CD4-positive, alpha-beta memory T cell (primary cell): ENCODE measurements at regions of chr3 and their contacts with region 1.

Region 1: DNA sequence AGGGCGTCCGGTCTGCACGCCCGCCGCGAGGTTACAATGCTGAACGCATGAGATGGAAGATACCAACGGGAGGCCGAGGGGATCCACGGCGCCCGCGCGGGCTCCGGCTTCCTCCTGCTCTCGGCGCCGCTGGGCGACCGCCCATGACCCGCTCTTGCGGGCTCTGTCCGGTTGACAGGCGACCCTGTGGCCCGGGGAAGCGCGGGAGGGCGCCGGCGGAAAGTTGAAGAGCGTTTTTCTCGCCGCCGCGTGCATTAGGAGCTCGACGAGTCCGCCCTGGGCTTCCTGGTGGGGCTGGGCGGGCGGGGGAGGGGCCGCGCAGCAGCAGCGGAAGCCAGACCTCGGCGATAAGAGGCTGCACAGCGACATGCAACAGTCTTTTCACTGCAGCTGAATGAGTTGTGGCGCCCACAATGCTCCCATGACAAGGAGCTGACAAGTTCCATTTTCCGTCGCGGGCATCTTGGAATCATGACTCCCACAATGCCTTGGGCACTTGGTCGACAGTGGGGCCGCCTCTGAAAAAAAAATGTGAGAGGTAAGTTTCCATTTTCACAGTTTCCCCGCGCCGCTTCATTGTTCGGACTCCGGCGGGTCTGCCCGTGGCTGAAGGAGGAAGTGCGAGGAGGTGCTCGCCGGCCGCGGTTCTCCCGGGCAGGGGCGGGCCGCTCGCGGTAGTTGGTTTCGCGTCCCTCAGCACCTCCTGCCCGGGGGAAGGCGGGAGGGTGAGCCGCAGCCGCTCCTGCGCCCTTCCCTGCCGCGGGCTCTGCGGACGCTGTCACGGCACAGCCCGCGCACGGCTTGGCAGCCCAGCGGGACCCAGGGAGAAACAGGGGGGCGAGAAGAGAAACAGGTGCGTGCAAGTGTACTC is at the start of gene MBNL1:
- DNase-seq: peak; percentile 83 to 93 (median 86)
- H3K4me3 ChIP-seq: peak within 1 kb of the TSS; percentile 87 to 90
- H3K4me3 Mint-ChIP-seq: peak within 1 kb of the TSS; percentile 90 to 100 (median 97)
- H3K27ac ChIP-seq: peak within 1 kb of the TSS; percentile 91
- H3K27ac Mint-ChIP-seq: peak within 1 kb of the TSS; percentile 80 to 100 (median 97)
- H3K4me1 ChIP-seq: peaks cover 61% of the 10 kb centered on the region
- H3K4me1 Mint-ChIP-seq: peaks cover 44 to 80% (median 57%) of the 10 kb centered on the region in 4 donors
- H3K27me3 ChIP-seq: no peaks in the 10 kb centered on the region
- H3K27me3 Mint-ChIP-seq: no peaks in the 10 kb centered on the region
- total RNA-seq, gene MBNL1: 420 to 430 TPM

Region 2: DNA sequence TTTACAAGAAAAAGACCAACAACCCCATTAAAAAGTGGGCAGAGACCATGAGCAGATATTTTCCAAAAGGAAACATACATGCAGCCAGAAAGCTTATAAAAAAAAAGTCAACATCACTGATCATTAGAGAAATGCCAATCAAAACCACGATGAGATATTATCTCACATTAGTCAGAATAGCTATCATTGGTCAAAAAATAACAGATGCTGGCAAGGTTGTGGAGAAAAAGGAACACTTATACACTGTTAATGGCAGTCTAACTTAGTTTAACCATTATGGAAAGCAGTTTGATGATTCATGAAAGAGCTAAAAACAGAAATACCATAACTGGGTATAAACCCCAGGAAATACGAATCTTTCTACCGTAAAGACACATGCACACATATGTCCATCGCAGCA is 319.1 kb before region 1 on chr3:
- CTCF ChIA-PET with region 1: no interaction called
- POLR2A ChIA-PET with region 1: no interaction called
- intact Hi-C with region 1: no loop called
- DNase-seq: no peak
- H3K4me3 ChIP-seq: no peak overlapping the region
- H3K4me3 Mint-ChIP-seq: no peak overlapping the region
- H3K27ac ChIP-seq: no peak overlapping the region
- H3K27ac Mint-ChIP-seq: no peak overlapping the region
- H3K4me1 ChIP-seq: no peaks in the 10 kb centered on the region
- H3K4me1 Mint-ChIP-seq: no peaks in the 10 kb centered on the region
- H3K27me3 ChIP-seq: no peaks in the 10 kb centered on the region
- H3K27me3 Mint-ChIP-seq: peaks cover 32 to 34% of the 10 kb centered on the region in 2 donors

Region 3: GRCh38 chr3:152051501-152052404 is 217.0 kb before region 1 on chr3:
- CTCF ChIA-PET with region 1: no interaction called
- POLR2A ChIA-PET with region 1: no interaction called
- intact Hi-C with region 1: no loop called
- DNase-seq: no peak
- H3K4me3 ChIP-seq: no peak overlapping the region
- H3K4me3 Mint-ChIP-seq: no peak overlapping the region
- H3K27ac ChIP-seq: no peak overlapping the region
- H3K27ac Mint-ChIP-seq: no peak overlapping the region
- H3K4me1 ChIP-seq: no peaks in the 10 kb centered on the region
- H3K4me1 Mint-ChIP-seq: no peaks in the 10 kb centered on the region
- H3K27me3 ChIP-seq: no peaks in the 10 kb centered on the region
- H3K27me3 Mint-ChIP-seq: no peaks in the 10 kb centered on the region

Region 4: DNA sequence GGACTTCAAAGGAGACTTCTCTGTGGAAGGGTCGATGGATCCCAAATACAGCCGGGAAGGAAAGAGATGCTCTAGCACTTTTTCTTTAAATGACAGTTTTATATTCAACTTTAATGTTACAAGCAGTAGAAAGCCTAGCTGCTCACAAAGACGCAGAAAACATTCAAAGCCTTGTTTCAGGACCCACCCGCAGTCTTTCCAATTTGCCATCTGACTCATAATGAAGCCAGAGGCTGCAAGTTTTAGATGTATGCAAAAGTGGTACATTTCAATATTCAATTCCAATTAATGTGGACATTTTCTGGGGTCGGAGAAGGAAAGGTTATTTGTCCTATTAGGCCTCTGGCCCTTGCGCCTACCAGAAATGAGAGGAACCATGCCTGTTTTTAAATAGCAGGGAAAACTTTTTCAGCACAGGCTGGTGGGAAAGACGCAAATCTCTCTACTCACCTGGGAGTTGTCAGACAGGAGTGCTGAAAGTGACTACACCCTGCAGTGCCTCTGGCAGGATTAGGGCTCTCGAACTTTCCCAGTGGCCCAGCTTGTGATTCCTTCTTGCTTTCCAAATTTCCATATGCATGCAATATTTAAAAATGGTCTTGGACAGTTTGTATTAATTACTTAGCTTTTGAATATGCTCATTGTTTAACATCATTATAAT is 117.4 kb before region 1 on chr3:
- CTCF ChIA-PET with region 1: no interaction called
- POLR2A ChIA-PET with region 1: no interaction called
- intact Hi-C with region 1: no loop called
- DNase-seq: no peak
- H3K4me3 ChIP-seq: no peak overlapping the region
- H3K4me3 Mint-ChIP-seq: no peak overlapping the region
- H3K27ac ChIP-seq: no peak overlapping the region
- H3K27ac Mint-ChIP-seq: peak overlapping the region in 1 of 7 donors; percentile 14
- H3K4me1 ChIP-seq: no peaks in the 10 kb centered on the region
- H3K4me1 Mint-ChIP-seq: peaks cover 0 to 4% (median 2%) of the 10 kb centered on the region in 4 donors
- H3K27me3 ChIP-seq: no peaks in the 10 kb centered on the region
- H3K27me3 Mint-ChIP-seq: peaks cover 0 to 2% of the 10 kb centered on the region in 2 donors

Region 5: DNA sequence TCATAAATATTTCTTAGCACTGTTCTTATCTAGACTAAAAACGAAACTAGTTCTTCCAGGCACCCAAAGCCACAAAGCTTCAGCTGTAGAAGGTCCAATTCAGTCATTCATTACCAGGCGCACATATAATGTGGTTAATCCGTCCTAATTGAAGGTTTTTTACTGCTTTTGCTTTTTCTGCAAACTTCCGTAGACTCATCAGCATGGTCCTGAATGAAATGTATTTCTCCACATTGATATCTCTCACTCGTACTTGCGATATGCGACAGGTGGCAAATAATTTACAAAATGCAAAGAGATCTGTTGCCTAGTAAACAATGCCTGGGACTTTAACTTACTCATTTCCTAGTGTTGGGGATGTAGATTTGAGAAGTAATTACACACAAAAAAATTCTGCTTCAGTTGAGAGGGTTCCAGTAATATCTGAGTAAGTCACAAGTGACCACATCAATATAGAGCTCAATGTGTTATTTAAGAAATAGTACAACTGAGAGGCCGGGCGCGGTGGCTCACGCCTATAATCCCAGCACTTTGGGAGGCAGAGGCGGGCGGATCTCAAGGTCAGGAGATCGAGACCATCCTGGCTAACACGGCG is 75.0 kb before region 1 on chr3:
- CTCF ChIA-PET with region 1: interaction called, 4 read pairs
- POLR2A ChIA-PET with region 1: interaction called, 267 read pairs
- intact Hi-C with region 1: loop called (anchors 1 kb)
- DNase-seq: peak; percentile 63 to 79 (median 68)
- H3K4me3 ChIP-seq: peak overlapping the region; percentile 31 to 37
- H3K4me3 Mint-ChIP-seq: peak overlapping the region; percentile 81 to 97 (median 90)
- H3K27ac ChIP-seq: peak overlapping the region; percentile 62
- H3K27ac Mint-ChIP-seq: peak overlapping the region; percentile 89 to 98 (median 92)
- H3K4me1 ChIP-seq: peaks cover 82% of the 10 kb centered on the region
- H3K4me1 Mint-ChIP-seq: peaks cover 60 to 85% (median 72%) of the 10 kb centered on the region in 4 donors
- H3K27me3 ChIP-seq: no peaks in the 10 kb centered on the region
- H3K27me3 Mint-ChIP-seq: no peaks in the 10 kb centered on the region

Region 6: DNA sequence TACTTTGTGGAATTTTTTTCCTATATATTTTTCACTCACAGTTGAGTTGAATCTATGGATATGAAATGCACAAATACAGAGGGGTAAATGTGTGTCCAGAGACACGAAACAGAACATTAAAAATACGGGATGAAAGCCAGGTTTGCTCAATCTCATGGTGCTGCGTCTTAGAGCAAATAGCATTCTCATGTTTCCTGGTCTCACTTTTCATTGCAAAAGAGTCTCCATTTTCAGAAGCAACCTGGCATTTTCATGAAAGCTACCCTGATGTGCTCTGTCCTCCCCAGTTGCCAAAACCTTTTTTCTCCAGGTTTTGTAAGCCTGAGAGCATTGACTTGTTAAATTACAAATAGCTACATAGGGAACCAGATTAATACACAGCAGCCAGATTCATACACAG is 49.6 kb before region 1 on chr3:
- CTCF ChIA-PET with region 1: no interaction called
- POLR2A ChIA-PET with region 1: interaction called, 10 read pairs
- intact Hi-C with region 1: no loop called
- DNase-seq: no peak
- H3K4me3 ChIP-seq: no peak overlapping the region
- H3K4me3 Mint-ChIP-seq: peak overlapping the region; percentile 9 to 82 (median 40)
- H3K27ac ChIP-seq: no peak overlapping the region
- H3K27ac Mint-ChIP-seq: peak overlapping the region in 6 of 7 donors; percentile 9 to 65 (median 31)
- H3K4me1 ChIP-seq: peaks cover 49% of the 10 kb centered on the region
- H3K4me1 Mint-ChIP-seq: peaks cover 36 to 69% (median 50%) of the 10 kb centered on the region in 4 donors
- H3K27me3 ChIP-seq: no peaks in the 10 kb centered on the region
- H3K27me3 Mint-ChIP-seq: no peaks in the 10 kb centered on the region

Region 7: GRCh38 chr3:152241142-152242017 is 27.4 kb before region 1 on chr3:
- CTCF ChIA-PET with region 1: interaction called, 46 read pairs
- POLR2A ChIA-PET with region 1: interaction called, 414 read pairs
- intact Hi-C with region 1: loop called (anchors 1 kb)
- DNase-seq: no peak
- H3K4me3 ChIP-seq: peak overlapping the region in 1 of 2 donors; percentile 17
- H3K4me3 Mint-ChIP-seq: peak overlapping the region; percentile 69 to 97 (median 78)
- H3K27ac ChIP-seq: peak overlapping the region; percentile 69
- H3K27ac Mint-ChIP-seq: peak overlapping the region; percentile 82 to 97 (median 92)
- H3K4me1 ChIP-seq: peaks cover 56% of the 10 kb centered on the region
- H3K4me1 Mint-ChIP-seq: peaks cover 46 to 81% (median 52%) of the 10 kb centered on the region in 4 donors
- H3K27me3 ChIP-seq: no peaks in the 10 kb centered on the region
- H3K27me3 Mint-ChIP-seq: no peaks in the 10 kb centered on the region

Region 8: GRCh38 chr3:152291649-152292066 is 22.9 kb after region 1 on chr3:
- CTCF ChIA-PET with region 1: no interaction called
- POLR2A ChIA-PET with region 1: interaction called, 206 read pairs
- intact Hi-C with region 1: no loop called
- DNase-seq: no peak
- H3K4me3 ChIP-seq: peak overlapping the region in 1 of 2 donors; percentile 4
- H3K4me3 Mint-ChIP-seq: peak overlapping the region; percentile 33 to 86 (median 68)
- H3K27ac ChIP-seq: peak overlapping the region; percentile 36
- H3K27ac Mint-ChIP-seq: peak overlapping the region; percentile 50 to 89 (median 80)
- H3K4me1 ChIP-seq: peaks cover 97% of the 10 kb centered on the region
- H3K4me1 Mint-ChIP-seq: peaks cover 55 to 82% (median 73%) of the 10 kb centered on the region in 4 donors
- H3K27me3 ChIP-seq: no peaks in the 10 kb centered on the region
- H3K27me3 Mint-ChIP-seq: no peaks in the 10 kb centered on the region

Region 9: DNA sequence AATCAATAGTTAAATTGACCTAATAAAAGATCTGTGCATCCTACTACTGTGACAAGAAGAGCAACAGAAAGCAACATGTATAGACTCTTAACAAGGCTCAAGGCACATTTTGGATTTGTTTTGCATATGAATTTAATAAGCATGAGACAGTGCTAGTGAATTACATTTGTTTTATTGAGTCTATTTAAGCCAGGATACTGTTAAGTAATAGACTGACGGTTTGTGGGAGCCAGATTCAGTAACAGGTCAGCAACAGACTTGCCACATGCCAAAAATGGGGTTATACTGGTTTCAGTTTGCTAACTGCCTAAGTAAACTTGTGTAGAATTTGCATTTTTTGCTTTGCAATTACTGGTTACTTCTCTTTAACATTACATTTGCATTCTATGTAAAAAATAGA is 54.0 kb after region 1 on chr3:
- CTCF ChIA-PET with region 1: no interaction called
- POLR2A ChIA-PET with region 1: interaction called, 18 read pairs
- intact Hi-C with region 1: loop called (anchors 2 kb)
- DNase-seq: no peak
- H3K4me3 ChIP-seq: no peak overlapping the region
- H3K4me3 Mint-ChIP-seq: peak overlapping the region; percentile 11 to 74 (median 68)
- H3K27ac ChIP-seq: peak overlapping the region; percentile 52
- H3K27ac Mint-ChIP-seq: peak overlapping the region; percentile 44 to 93 (median 79)
- H3K4me1 ChIP-seq: peaks cover 95% of the 10 kb centered on the region
- H3K4me1 Mint-ChIP-seq: peaks cover 62 to 90% (median 73%) of the 10 kb centered on the region in 4 donors
- H3K27me3 ChIP-seq: no peaks in the 10 kb centered on the region
- H3K27me3 Mint-ChIP-seq: no peaks in the 10 kb centered on the region